ENCODE measurements at regions of chr11 and their contacts with region 1.

Region 1: GRCh38 chr11:78290293-78291176 is 101.8 kb downstream of the USP35 start:
- DNase-seq: peak; percentile 37
- H3K4me3 Mint-ChIP-seq: peak overlapping the region; percentile 31
- H3K27ac Mint-ChIP-seq: peak overlapping the region; percentile 91
- H3K4me1 Mint-ChIP-seq: peaks cover 68% of the 10 kb centered on the region
- H3K27me3 Mint-ChIP-seq: no peaks in the 10 kb centered on the region

Region 2: GRCh38 chr11:78161962-78162371 is 128.6 kb before region 1 on chr11:
- intact Hi-C with region 1: no loop called
- DNase-seq: no peak
- H3K4me3 Mint-ChIP-seq: no peak overlapping the region
- H3K27ac Mint-ChIP-seq: no peak overlapping the region
- H3K4me1 Mint-ChIP-seq: no peaks in the 10 kb centered on the region
- H3K27me3 Mint-ChIP-seq: no peaks in the 10 kb centered on the region

Region 3: DNA sequence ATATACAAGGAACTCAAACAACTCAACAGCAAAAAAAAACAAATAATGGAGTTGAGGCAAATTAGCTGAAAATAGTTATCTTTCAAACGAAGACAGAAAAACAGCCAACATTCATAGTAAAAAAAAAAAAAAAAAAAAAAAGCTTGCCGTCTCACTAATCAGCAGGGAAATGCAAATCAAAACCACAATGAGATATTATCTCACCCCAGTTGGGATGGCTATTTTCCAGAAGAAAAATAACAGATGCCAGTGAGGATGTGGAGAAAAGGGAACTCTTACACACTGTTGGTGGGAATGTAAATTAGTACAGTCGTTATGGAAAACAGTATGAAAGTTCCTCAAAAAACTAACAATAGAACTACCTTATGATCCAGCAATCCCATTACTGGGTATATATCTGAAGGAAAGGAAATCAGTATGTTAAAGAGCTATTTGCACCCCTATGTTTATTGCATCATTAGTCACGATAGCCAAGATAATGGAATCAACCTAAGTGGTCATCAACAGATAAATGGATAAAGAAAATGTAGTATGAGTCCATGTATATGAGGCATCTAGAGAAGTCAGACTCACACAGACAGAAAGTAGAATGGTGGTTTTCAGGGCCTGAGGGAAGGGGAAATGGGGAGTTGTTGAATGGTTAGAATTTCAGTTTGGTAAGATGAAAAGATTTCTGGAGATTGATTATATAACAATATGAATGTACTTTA is 45.8 kb before region 1 on chr11:
- intact Hi-C with region 1: loop called (anchors 5 kb)
- DNase-seq: no peak
- H3K4me3 Mint-ChIP-seq: peak overlapping the region; percentile 6
- H3K27ac Mint-ChIP-seq: peak overlapping the region; percentile 8
- H3K4me1 Mint-ChIP-seq: peaks cover 24% of the 10 kb centered on the region
- H3K27me3 Mint-ChIP-seq: no peaks in the 10 kb centered on the region

Region 4: GRCh38 chr11:78304201-78304600 is 13.7 kb after region 1 on chr11:
- intact Hi-C with region 1: no loop called
- DNase-seq: no peak
- H3K4me3 Mint-ChIP-seq: no peak overlapping the region
- H3K27ac Mint-ChIP-seq: no peak overlapping the region
- H3K4me1 Mint-ChIP-seq: peaks cover 53% of the 10 kb centered on the region
- H3K27me3 Mint-ChIP-seq: no peaks in the 10 kb centered on the region

Region 5: DNA sequence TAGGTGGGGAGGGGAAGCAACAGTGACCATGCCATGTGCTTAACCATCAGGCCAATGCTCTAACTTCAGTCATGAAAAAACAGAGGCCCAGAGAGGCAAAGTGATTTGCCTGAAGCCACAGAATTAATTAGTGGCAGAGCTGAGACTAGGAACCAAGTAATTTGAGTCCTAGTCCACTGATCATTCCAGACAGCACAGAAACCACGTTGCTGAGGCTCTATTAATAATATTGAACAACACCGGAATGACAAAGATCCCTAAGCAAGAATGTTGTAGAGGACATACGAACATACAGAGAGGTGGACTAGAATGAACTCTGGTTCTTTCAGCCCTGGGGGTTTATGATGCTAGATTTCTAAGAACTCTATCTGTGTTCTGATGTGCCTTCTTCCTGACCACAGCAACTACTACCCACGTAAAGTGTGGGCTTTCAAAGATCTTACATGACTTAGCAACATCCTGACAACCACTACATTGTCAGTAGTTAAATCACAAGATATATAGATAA is 34.8 kb after region 1 on chr11:
- intact Hi-C with region 1: loop called (anchors 1 kb)
- DNase-seq: peak; percentile 41
- H3K4me3 Mint-ChIP-seq: peak overlapping the region; percentile 10
- H3K27ac Mint-ChIP-seq: peak overlapping the region; percentile 85
- H3K4me1 Mint-ChIP-seq: peaks cover 93% of the 10 kb centered on the region
- H3K27me3 Mint-ChIP-seq: no peaks in the 10 kb centered on the region

Region 6: GRCh38 chr11:78424334-78425270 is 134.1 kb after region 1 on chr11:
- intact Hi-C with region 1: loop called (anchors 2 kb)
- DNase-seq: no peak
- H3K4me3 Mint-ChIP-seq: peak overlapping the region; percentile 55
- H3K27ac Mint-ChIP-seq: peak overlapping the region; percentile 73
- H3K4me1 Mint-ChIP-seq: peaks cover 83% of the 10 kb centered on the region
- H3K27me3 Mint-ChIP-seq: no peaks in the 10 kb centered on the region

Region 7: DNA sequence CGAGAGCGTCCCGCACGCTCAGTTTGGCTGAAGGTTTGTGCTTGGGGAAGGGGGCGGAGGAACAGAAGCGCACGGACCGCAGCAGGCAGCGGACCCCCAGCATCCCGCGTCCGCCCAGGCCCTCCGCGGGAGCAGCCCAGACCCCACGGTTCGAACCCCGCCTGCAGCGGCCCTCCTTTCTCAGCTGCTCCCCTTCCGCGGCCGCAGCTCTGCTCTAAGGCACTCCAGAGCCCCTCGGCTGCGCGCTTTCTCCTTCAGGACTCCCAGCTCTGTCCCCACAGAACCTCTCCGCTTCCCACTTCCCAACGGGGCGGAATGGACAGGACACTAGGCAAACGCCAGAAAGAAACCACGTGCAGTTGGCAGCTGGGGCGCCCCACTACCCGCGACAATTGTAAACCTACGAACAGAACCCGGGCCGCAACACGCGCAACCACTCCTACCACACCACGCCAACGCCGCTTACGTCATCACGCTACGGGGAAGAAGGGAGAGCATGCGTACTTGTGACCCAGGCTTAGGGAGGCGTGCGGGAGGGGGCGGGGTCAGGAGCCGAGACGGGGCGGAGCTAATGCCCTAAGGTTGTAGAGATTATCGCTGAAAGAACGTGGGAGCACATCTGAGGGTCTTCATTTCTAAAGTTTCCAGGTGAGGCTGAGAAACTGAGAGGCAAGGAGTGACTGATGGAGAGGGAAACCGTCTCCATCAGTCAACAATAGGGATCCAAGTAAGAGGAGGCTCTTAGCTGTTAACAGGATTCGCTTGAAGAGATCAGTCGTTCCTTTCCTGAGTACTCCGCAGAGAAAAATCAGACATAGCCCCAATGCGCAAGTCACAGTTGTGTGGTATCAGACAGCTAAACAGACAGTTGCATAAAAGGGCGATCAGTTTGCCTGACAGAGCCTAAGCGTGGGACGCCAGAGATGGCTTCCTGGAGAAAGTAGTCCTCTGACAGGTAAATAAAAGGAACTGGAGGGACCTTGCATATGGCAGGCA is 284.1 kb after region 1 on chr11 and contains the start of gene NARS2:
- intact Hi-C with region 1: no loop called
- DNase-seq: peak; percentile 95
- H3K4me3 Mint-ChIP-seq: peak within 1 kb of the TSS; percentile 93
- H3K27ac Mint-ChIP-seq: peak within 1 kb of the TSS; percentile 93
- H3K4me1 Mint-ChIP-seq: peaks cover 31% of the 10 kb centered on the region
- H3K27me3 Mint-ChIP-seq: peaks cover 3% of the 10 kb centered on the region
- total RNA-seq, gene NARS2: 34.1 and 37.7 TPM in 2 replicates

Measured in activated T-helper 2 cell treated with anti-CD3 and anti-CD28 coated beads, Interferon-gamma antibody, Interleukin-2, Interleukin-4, amounts not matched to agents 10 μg/mL and 5 μg/mL and 100 μg/mL, durations not matched to agents 14 hours and 24 hours and 36 hours (primary cell).